Heart right ventricle (tissue), 16 donors: ENCODE measurements at regions of chr14 and their contacts with region 1.

Region 1: DNA sequence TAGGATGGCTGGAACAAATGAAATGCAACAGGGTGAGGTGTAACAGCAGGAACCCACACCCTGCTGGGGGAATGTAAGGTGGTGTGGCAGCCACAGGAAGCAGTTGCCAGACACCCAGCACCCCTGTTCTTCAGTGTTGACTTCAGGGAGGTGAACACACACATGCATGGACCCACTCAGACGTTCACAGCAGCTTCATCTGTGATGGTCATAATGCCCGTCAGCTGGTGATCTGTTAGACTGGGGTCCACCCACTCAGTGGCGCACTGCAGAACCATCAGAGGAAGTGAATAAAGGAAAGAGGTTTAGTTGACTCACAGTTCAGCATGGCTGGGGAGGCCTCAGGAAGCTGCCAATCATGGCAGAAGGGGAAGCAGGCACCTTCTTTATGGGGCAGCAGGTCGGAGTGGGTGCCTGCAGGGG is 22.7 kb upstream of the TEX22 start:
- DNase-seq: no peak
- ATAC-seq: no peak
- H3K4me3 ChIP-seq: no peak overlapping the region
- H3K27ac ChIP-seq: no peak overlapping the region
- H3K4me1 ChIP-seq: peaks cover 0 to 11% (median 0%) of the 10 kb centered on the region in 9 donors
- H3K27me3 ChIP-seq: no peaks in the 10 kb centered on the region
- CTCF ChIP-seq: no peak

Region 2: GRCh38 chr14:105414456-105415371 is 39.1 kb after region 1 on chr14:
- intact Hi-C with region 1: loop called in 1 of 10 experiments (anchors 5 kb)
- DNase-seq: peak; percentile 78 to 85
- ATAC-seq: peak; percentile 79 to 89 (median 82)
- H3K4me3 ChIP-seq: peak overlapping the region in 9 of 10 donors; percentile 27 to 64 (median 56)
- H3K27ac ChIP-seq: peak overlapping the region; percentile 59 to 87 (median 78)
- H3K4me1 ChIP-seq: peaks cover 9 to 46% (median 39%) of the 10 kb centered on the region in 9 donors
- H3K27me3 ChIP-seq: peaks cover 0 to 53% (median 3%) of the 10 kb centered on the region in 7 donors
- CTCF ChIP-seq: peak; percentile 55 to 88 (median 79)

Region 3: GRCh38 chr14:105430535-105430934 is 54.9 kb after region 1 on chr14:
- intact Hi-C with region 1: loop called in 1 of 10 experiments (anchors 10 kb)
- DNase-seq: no peak
- ATAC-seq: no peak
- H3K4me3 ChIP-seq: no peak overlapping the region
- H3K27ac ChIP-seq: peak overlapping the region in 5 of 10 donors; percentile 2 to 52 (median 14)
- H3K4me1 ChIP-seq: peaks cover 0 to 24% (median 10%) of the 10 kb centered on the region in 9 donors
- H3K27me3 ChIP-seq: no peaks in the 10 kb centered on the region
- CTCF ChIP-seq: no peak

Region 4: DNA sequence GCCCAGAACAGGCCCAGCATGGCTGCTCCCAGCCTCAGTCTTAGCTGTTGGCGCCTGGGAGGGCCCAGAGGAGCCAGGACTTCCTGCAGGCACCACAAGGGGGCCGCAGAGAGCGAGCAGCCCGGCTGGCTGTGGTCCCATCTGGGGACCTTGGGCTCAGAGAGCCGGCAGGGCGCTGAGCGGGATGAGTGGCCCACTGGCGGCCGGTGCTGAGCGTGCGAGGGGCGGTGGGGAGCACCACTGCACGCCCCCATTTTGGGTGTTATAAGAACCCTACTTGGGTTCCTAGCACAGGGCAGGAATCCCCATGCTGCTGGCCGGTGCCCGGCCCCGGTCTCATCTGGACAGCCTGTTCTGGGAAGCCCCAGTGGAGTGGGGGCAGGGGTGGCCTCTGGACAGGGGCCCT is 73.1 kb after region 1 on chr14:
- intact Hi-C with region 1: loop called in 5 of 10 experiments (anchors 5 to 10 kb)
- DNase-seq: peak; percentile 79 to 84
- ATAC-seq: peak; percentile 86 to 95 (median 93)
- H3K4me3 ChIP-seq: peak overlapping the region in 3 of 10 donors; percentile 3 to 12 (median 8)
- H3K27ac ChIP-seq: peak overlapping the region in 8 of 10 donors; percentile 6 to 71 (median 36)
- H3K4me1 ChIP-seq: peaks cover 11 to 34% (median 18%) of the 10 kb centered on the region in 9 donors
- H3K27me3 ChIP-seq: no peaks in the 10 kb centered on the region
- CTCF ChIP-seq: peak; percentile 95 to 98 (median 97)